ENCODE measurements at regions of chr10 and their contacts with region 1.

Region 1: DNA sequence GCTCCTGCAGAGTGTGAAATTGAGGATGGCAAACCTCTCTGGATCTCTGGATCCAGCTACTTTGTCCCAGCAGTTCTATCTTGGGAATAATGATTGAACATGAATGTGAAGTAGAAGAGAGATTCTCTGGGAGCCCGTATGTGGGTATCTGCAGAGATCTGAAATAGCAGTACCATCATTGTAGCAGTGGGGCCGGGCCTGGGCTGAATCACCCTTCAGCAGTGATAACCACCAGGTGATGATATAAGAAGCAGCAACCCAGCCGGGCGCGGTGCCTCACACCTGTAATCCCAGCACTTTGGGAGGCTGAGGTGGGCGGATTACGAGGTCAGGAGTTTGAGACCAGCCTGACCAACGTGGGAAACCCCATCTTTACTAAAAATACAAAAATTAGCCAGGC is 51.9 kb downstream of the SKIDA1 start:
- DNase-seq: no peak
- H3K4me3 ChIP-seq: no peak overlapping the region
- H3K27me3 ChIP-seq: no peaks in the 10 kb centered on the region
- CTCF ChIP-seq: no peak

Region 2: GRCh38 chr10:22464966-22465629 is 991.5 kb after region 1 on chr10:
- CTCF ChIA-PET with region 1: no interaction called
- POLR2A ChIA-PET with region 1: no interaction called
- DNase-seq: no peak
- H3K4me3 ChIP-seq: no peak overlapping the region
- H3K27me3 ChIP-seq: no peaks in the 10 kb centered on the region; the same call in none of the 2 replicates
- CTCF ChIP-seq: no peak

Region 3: GRCh38 chr10:22545643-22546042 is 1072.1 kb after region 1 on chr10:
- CTCF ChIA-PET with region 1: no interaction called
- POLR2A ChIA-PET with region 1: interaction called, 10 read pairs
- DNase-seq: no peak
- H3K4me3 ChIP-seq: no peak overlapping the region
- H3K27me3 ChIP-seq: no peaks in the 10 kb centered on the region
- CTCF ChIP-seq: no peak